MCF 10A (cell line): ENCODE measurements at regions of chr17 and their contacts with region 1.

Region 1: DNA sequence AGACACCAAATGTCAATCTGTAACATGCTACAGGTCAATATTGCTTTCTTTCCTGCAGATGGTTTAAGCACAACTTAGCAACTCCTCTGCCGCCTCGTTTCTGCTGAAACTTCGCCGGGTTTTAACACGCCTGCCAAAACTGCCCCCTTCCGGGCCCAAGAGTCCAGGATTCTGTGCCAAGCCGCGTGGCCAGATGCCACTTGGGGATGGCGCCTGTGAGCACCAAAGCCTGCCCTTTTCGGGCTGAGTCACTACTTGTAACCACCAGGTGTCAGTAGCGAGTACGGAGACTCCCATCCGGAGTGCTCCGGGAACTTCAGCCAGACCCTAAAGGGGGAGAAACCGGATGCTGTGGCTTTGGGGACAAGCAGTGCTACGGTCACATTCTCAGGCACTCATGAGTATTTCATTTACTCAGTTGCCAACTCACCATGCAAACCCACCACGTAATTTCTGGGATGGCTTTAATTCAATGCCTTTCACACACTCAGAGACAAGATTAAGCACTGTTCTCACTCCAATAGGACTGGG is 7.8 kb downstream of the PMP22 start:
- DNase-seq: peak; percentile 86
- H3K4me3 Mint-ChIP-seq: no peak overlapping the region
- H3K27ac Mint-ChIP-seq: no peak overlapping the region
- H3K4me1 Mint-ChIP-seq: peaks cover 9% of the 10 kb centered on the region
- H3K27me3 Mint-ChIP-seq: peaks cover 9% of the 10 kb centered on the region
- CTCF ChIP-seq: peak; percentile 69

Region 2: DNA sequence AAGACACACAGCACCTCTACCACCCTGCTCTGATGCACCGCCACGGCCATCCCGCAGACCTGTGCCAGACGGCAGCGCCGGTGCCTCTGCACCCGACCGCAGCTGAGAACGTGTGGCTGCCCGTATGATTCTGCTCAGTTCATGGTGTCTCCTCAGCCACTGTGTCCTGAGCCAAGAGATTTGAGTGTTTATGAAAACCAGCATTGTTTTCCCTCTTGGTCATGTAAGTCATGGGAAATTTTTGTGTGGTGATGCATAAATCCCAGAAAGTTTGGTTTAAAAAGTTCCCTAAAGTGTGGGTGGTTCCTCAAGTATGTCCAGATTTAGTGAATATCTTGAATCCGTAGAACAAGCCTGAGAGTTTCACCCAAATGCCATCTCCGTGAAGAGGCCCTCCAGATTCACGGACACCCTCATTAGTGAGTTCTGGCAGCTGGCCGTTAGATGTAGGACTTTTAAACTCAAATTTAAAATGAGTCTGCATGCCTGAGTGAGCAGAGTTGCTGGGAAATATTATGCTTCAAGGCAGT is 152.5 kb after region 1 on chr17:
- CTCF ChIA-PET with region 1: interaction called, 4 read pairs
- POLR2A ChIA-PET with region 1: no interaction called
- intact Hi-C with region 1: loop called (anchors 1 kb)
- DNase-seq: peak; percentile 67
- H3K4me3 Mint-ChIP-seq: peak overlapping the region; percentile 54
- H3K27ac Mint-ChIP-seq: peak overlapping the region; percentile 80
- H3K4me1 Mint-ChIP-seq: peaks cover 19% of the 10 kb centered on the region
- H3K27me3 Mint-ChIP-seq: no peaks in the 10 kb centered on the region
- CTCF ChIP-seq: no peak

Region 3: GRCh38 chr17:15432807-15433600 is 175.7 kb after region 1 on chr17:
- CTCF ChIA-PET with region 1: no interaction called
- POLR2A ChIA-PET with region 1: no interaction called
- intact Hi-C with region 1: no loop called
- DNase-seq: no peak
- H3K4me3 Mint-ChIP-seq: no peak overlapping the region
- H3K27ac Mint-ChIP-seq: no peak overlapping the region
- H3K4me1 Mint-ChIP-seq: no peaks in the 10 kb centered on the region
- H3K27me3 Mint-ChIP-seq: no peaks in the 10 kb centered on the region
- CTCF ChIP-seq: no peak

Region 4: DNA sequence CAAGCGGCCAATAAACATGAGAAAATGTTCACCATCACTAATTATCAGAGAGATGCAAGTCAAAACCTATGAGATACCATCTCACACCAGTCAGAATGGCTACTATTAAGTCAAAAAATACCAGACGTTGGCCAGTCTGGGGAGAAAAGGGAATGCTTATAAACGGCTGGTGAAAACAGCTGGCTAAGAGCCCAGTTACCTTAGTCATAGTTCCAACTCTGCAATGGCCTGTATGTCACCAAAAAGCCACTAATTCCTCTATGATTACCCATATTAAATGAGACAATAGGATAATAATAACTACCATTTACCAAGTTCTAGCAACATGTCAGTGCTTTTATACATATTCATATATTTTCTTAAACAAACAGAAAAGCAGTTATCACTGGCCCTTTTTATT is 253.0 kb after region 1 on chr17:
- CTCF ChIA-PET with region 1: interaction called, 12 read pairs
- POLR2A ChIA-PET with region 1: no interaction called
- intact Hi-C with region 1: no loop called
- DNase-seq: peak; percentile 60
- H3K4me3 Mint-ChIP-seq: no peak overlapping the region
- H3K27ac Mint-ChIP-seq: no peak overlapping the region
- H3K4me1 Mint-ChIP-seq: peaks cover 8% of the 10 kb centered on the region
- H3K27me3 Mint-ChIP-seq: no peaks in the 10 kb centered on the region
- CTCF ChIP-seq: no peak